Dorsolateral prefrontal cortex (tissue), 120 donors: ENCODE measurements at regions of chr9 and their contacts with region 1.

Region 1: DNA sequence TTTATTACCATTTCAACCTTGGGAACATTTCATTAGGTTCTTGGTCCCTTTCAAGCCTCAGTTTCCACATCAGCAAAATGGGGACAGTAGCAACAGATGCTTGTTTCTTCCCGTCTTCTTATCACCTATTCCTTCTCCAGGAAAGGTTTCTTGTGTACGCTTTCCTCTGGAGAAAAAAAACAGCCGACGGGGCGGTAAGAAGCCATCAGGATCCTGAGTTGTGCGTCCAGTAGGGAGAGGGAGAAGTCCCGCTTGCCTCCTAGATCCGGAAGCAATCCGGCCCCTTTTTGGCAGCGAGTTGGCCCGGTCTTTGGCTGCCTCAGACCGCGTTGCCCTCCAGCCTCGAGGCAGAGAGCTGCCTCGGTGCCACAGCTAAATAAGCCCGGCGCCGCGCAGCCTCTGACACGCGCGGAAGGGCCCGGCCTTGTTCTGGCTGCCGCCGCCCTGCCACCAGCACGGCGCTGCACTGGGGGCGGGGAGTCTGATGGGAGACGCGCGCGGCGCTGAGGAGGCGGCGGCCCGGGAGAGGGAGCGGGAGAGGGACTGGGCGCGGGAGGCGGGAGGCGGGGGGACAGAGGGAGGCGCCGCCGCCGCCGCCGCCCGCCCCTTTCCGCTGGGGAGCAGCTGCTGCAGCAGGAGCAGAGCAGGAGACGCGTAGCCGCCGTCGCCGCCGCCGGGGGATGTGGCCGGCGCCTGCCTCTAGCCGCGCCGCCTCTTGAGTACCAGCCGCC is at the start of gene SLC44A1:
- DNase-seq: peak; percentile 93 to 98 (median 96)
- H3K4me3 ChIP-seq: peak within 1 kb of the TSS; percentile 56 to 96 (median 86)
- H3K27ac ChIP-seq: peak within 1 kb of the TSS; percentile 73 to 98 (median 95)
- H3K27me3 ChIP-seq: no peaks in the 10 kb centered on the region
- CTCF ChIP-seq: peak in 43 of 56 donors; percentile 16 to 56 (median 33)
- total RNA-seq, gene SLC44A1: 60.7 to 602 (median 176) TPM

Region 2: DNA sequence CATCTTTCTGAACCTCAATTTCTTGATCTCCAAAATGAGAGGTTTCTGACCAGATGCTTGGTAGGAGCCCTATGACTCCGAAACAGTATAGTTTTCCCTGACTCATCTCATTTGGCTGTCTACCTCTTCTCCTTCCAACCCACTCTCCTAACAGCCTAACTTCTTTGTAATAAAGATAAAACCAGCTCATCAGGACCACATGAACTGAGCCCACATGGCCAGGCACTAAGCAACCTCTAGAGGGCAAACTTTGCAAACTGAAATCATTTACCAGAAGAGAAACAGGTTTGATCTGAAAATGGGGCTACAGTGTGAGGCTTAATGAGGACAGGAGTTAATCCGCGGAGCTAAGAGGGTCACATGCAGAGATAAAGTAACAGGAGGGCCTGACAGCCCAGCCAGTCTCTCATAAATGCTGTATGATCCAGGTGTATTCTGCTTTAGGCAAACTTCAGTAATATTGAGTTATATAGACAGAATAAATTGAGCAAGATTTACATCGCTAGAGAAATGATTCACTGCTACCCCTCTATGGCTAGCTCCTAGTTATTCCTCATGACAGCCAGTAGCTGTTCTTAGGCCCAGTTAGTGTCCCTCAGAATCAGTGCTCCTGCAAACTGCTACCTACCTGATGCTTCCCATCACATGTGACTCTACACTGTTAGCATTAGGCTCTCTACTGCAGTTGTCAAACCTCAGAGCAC is 380.8 kb before region 1 on chr9:
- intact Hi-C with region 1: loop called in 1 of 2 experiments (anchors 5 kb)
- DNase-seq: peak in 7 of 10 donors; percentile 28 to 68 (median 45)
- H3K4me3 ChIP-seq: peak overlapping the region in 2 of 59 donors; percentile 10 to 26
- H3K27ac ChIP-seq: peak overlapping the region in 12 of 59 donors; percentile 7 to 64 (median 35)
- H3K27me3 ChIP-seq: no peaks in the 10 kb centered on the region
- CTCF ChIP-seq: peak; percentile 66 to 91 (median 84)

Region 3: DNA sequence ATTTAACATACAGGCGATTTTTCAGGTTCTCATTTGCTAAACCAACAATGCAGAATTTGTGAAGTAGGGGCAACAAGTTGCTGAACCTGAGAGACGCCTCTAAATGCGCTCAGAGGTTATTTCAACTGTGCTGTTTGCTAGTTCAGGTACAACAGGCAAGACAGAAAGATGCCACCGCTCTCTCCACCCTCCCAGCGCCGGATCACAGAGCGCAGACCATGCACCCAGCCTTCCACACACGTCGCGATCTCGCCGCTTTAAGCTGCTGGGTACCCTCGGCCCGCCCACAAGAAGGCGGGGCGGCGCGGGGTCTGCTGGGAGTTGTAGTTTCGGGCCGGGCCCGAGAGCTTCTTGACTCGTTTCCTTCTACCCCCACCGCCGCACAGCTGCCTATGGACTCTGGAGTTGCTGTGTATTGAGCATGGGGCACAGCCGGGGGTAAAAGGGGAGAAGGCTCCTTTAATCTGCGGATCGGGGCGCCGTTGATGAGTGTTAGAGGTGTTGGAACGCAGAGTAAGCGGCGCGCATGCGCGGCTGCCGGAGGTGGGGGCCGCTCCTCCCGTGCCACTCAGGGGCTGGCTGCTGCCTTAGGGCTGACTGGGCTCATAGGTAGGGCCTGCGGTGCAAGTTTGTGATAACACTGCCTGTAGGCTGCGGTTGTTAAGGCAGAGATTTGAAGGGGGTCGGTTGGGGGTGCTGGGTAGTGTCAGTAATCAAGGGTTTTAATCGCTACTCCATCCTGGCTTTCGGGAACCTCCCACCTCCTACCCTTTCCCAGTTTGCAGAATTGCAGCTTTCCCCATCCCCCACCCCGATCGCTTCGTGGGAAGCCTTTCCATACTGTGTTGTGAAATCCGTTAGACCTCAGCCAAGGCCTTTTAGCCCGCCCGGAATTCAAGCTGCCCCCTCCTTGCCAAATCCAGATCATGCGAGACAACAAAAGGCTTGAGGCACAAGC is 275.9 kb before region 1 on chr9:
- intact Hi-C with region 1: loop called in 1 of 2 experiments (anchors 10 kb)
- DNase-seq: peak; percentile 85 to 93 (median 90)
- H3K4me3 ChIP-seq: peak overlapping the region; percentile 52 to 99 (median 82)
- H3K27ac ChIP-seq: peak overlapping the region; percentile 89 to 100 (median 98)
- H3K27me3 ChIP-seq: no peaks in the 10 kb centered on the region
- CTCF ChIP-seq: peak in 12 of 56 donors; percentile 6 to 34 (median 23)

Region 4: DNA sequence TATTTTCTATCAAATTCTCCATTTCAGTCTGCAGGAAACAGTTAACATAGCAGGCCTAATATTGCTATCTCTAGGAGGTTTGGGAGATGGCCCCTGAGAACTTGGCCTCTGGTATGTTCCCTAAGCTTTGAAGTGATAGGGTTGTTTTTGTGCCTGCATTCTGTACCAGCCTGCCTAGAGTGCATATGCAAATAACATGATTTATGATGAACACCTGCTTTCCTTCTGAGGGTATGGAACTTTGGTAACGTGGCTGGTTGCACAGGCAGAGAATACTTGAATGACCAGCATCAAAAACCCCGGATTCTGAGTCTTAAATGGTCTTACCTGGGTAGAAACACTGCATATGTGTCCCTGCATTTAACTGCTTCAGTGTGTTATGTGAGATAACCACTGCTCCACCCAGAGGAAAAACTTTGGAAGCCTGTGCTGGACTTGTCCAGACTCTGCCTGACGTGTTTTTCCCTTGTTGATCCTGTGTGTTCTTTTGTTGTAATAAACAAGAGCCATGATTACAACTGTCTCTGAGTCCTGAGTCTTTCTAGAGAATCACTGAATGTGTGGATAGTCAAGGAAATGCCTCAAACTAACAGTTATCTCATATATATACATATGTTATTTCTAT is 204.9 kb before region 1 on chr9:
- intact Hi-C with region 1: no loop called
- DNase-seq: no peak
- H3K4me3 ChIP-seq: no peak overlapping the region
- H3K27ac ChIP-seq: no peak overlapping the region
- H3K27me3 ChIP-seq: no peaks in the 10 kb centered on the region
- CTCF ChIP-seq: no peak

Region 5: DNA sequence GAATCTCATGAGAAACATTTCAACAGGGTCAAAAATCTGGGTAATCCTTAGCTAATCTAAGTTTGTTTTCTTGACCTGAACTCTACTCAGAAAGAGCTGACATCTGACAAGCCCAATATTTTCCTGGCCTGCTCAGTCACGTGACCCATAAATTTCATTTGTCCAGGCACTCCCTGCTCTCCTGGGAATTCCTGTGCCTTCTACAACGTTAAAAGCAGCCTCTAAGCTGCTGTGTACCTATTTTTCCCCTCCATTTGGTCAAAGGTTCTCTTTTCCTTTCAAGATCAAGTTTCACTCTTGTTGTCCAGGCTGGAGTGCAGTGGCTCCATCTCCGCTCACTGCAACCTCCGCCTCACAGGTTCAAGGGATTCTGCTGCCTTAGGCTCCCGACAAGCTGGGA is 167.4 kb before region 1 on chr9:
- intact Hi-C with region 1: no loop called
- DNase-seq: no peak
- H3K4me3 ChIP-seq: no peak overlapping the region
- H3K27ac ChIP-seq: no peak overlapping the region
- H3K27me3 ChIP-seq: no peaks in the 10 kb centered on the region
- CTCF ChIP-seq: no peak

Region 6: DNA sequence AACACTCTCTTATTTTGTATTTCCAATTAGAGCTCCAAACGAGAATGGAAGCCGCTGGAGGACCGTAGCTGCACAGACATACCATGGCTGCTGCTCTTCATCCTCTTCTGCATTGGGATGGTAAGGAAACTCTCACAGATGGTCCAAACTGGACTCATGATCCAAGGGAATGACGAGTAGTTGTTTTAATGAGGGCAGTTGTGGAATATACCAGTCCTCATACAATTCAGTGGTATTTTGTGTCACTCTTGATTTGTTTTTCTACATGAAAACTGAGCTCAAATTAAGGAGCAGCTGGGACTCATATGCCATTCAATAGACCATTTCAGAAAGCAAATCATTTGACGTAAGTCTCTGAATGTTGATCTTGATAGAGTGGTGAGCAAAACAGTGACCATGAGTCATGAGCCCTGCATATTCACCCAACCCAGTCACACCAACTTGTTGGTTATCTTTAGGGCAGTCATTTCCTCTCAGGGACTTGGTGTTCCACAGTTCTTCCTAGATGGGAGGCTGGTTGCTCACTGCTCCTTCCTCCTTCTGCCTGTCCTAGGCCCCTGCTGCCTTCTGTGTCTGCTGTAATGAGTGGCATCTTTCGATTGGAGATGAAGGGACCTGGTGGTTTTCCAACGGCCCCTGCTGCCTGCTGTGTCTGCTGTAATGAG is 55.2 kb after region 1 on chr9:
- intact Hi-C with region 1: loop called (anchors 5 kb)
- DNase-seq: peak in 2 of 10 donors; percentile 47 to 60
- H3K4me3 ChIP-seq: peak overlapping the region in 1 of 59 donors; percentile 10
- H3K27ac ChIP-seq: peak overlapping the region; percentile 61 to 99 (median 94)
- H3K27me3 ChIP-seq: no peaks in the 10 kb centered on the region
- CTCF ChIP-seq: no peak

Region 7: DNA sequence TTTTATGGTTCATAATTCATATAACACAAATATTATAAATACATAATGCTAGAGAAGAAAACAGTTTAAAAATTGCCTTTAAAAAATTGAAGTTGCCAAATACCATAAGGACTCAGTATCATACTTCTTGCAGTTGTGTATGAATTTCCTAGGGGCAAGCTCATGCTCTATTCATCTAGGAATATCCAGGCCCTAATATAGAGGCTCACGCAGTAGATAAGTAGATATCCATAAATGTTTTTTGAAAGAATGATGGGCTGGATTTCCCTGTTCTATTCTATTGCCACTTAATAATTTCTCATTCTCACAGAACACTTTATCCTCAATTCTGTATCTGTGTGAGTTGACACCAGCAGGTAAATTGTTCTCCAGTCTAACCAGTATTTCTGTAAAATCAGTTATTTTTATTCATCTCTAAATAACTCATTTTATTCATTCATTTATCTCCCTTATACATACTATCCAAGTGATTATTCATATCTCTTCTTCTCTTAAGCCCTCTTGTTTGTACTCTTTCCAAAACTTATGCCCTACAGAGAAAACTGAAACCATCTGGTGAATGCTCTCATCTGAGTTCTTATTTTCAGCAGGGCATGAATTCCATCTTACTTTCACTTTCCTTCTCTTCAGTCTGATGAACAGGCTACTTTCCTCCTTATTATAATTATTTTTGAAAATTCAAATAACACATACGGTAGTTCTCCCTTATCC is 97.4 kb after region 1 on chr9:
- intact Hi-C with region 1: loop called in 1 of 2 experiments (anchors 10 kb)
- DNase-seq: no peak
- H3K4me3 ChIP-seq: peak overlapping the region in 41 of 59 donors; percentile 2 to 49 (median 27)
- H3K27ac ChIP-seq: peak overlapping the region in 52 of 59 donors; percentile 0 to 83 (median 63)
- H3K27me3 ChIP-seq: no peaks in the 10 kb centered on the region
- CTCF ChIP-seq: no peak

Region 8: GRCh38 chr9:105392531-105392930 is 148.4 kb after region 1 on chr9:
- intact Hi-C with region 1: loop called in 1 of 2 experiments (anchors 5 kb)
- DNase-seq: no peak
- H3K4me3 ChIP-seq: no peak overlapping the region
- H3K27ac ChIP-seq: peak overlapping the region in 37 of 59 donors; percentile 3 to 77 (median 45)
- H3K27me3 ChIP-seq: no peaks in the 10 kb centered on the region
- CTCF ChIP-seq: no peak

Region 9: GRCh38 chr9:105414947-105415661 is 170.9 kb after region 1 on chr9:
- intact Hi-C with region 1: loop called in 1 of 2 experiments (anchors 5 kb)
- DNase-seq: peak in 6 of 10 donors; percentile 35 to 67 (median 58)
- H3K4me3 ChIP-seq: peak overlapping the region in 4 of 59 donors; percentile 11 to 33 (median 24)
- H3K27ac ChIP-seq: peak overlapping the region in 44 of 59 donors; percentile 1 to 84 (median 57)
- H3K27me3 ChIP-seq: no peaks in the 10 kb centered on the region
- CTCF ChIP-seq: peak; percentile 77 to 97 (median 88)